ENCODE measurements at regions of chr6 and their contacts with region 1.

Region 1: DNA sequence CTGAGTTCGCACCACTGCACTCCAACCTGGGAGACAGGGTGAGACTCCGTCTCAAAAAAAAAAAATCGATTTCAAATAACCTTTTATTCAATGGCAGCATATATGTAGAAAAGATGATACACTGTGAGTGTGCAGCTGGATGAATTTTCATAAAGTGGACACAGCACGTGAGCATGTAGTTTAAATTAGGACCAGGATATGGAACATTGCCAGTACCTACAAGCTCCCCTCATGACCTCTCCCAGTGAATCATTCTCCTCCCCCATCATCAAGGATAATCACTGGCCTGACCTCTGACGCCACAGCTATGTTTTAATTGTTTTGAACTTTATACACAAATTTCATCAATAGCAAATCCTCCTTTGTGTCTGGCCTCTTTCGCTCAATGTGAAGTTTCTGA is 53.8 kb upstream of the HDAC2 start:
- DNase-seq: no peak
- ATAC-seq: no peak
- H3K4me3 ChIP-seq: no peak overlapping the region
- H3K27ac ChIP-seq: no peak overlapping the region
- H3K4me1 ChIP-seq: no peaks in the 10 kb centered on the region
- H3K27me3 ChIP-seq: no peaks in the 10 kb centered on the region
- CTCF ChIP-seq: no peak

Region 2: DNA sequence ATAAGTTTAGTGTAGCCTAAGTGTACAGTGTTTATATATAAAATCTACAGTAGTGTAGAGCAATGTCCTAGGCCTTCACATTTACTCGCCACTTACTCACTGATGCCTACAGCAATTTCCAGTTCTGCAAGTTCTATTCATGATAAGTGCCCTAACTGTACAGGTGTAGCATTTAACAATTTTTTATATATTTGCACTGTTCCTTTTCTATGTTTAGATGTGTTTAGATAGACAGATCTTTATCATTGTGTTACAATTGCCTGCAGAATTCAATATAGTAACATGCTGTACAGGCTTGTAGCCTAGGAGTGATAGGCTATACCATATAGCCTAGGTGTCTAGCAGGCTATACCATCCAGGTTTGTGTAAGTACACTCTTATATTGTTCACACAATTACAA is 26.4 kb after region 1 on chr6:
- CTCF ChIA-PET with region 1: no interaction called
- POLR2A ChIA-PET with region 1: no interaction called
- intact Hi-C with region 1: loop called (anchors 5 kb)
- DNase-seq: peak; percentile 60
- ATAC-seq: peak; percentile 82
- H3K4me3 ChIP-seq: no peak overlapping the region
- H3K27ac ChIP-seq: no peak overlapping the region; the same call in 1 of the 2 replicates
- H3K4me1 ChIP-seq: peaks cover 15% of the 10 kb centered on the region
- H3K27me3 ChIP-seq: no peaks in the 10 kb centered on the region
- CTCF ChIP-seq: no peak